GM10248 (cell line): ENCODE measurements at regions of chr18 and their contacts with region 1.

Region 1: DNA sequence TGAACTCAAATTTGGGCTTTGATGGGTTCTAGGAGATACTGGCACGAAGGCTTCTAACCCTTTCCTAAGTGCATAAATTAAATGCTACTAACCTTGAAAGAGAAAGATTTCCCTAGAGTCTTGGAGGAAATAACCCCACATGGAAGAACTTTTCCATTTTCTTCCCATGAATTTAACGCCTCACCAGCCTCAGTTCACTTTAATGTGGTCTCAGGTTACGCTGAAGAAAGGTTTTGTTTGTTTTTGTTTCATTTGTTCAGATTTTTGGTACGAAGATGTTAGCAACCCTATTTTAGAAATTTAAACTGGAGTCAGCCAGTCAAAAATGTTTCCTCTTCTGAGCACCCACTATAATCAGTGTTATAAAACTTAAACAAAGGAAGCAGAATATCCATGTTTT is 30.7 kb downstream of the METTL4 start:
- DNase-seq: no peak
- CTCF ChIP-seq: no peak

Region 2: GRCh38 chr18:2466978-2467377 is 73.6 kb before region 1 on chr18:
- CTCF ChIA-PET with region 1: no interaction called
- POLR2A ChIA-PET with region 1: no interaction called
- DNase-seq: no peak
- CTCF ChIP-seq: no peak

Region 3: DNA sequence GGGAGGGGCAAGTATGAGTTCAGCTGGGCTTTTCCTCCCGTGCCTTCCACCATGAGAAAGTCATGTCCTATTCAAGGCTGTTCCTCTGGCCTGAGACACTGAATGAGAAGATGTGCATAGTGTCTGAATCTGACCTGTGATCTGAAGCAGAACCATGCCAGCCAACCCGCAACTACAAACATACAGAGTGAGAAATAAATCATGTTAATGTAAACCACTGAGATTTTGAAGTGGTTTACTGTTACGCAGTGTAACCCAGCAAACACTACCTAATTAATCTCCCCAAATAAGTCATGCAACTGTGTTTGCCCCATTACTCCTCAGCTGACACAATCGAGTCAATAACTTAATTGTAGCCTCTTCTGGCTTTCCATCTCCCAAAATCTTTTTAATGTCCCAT is 18.5 kb before region 1 on chr18:
- CTCF ChIA-PET with region 1: interaction called, 11 read pairs
- POLR2A ChIA-PET with region 1: no interaction called
- DNase-seq: no peak
- CTCF ChIP-seq: no peak

Region 4: DNA sequence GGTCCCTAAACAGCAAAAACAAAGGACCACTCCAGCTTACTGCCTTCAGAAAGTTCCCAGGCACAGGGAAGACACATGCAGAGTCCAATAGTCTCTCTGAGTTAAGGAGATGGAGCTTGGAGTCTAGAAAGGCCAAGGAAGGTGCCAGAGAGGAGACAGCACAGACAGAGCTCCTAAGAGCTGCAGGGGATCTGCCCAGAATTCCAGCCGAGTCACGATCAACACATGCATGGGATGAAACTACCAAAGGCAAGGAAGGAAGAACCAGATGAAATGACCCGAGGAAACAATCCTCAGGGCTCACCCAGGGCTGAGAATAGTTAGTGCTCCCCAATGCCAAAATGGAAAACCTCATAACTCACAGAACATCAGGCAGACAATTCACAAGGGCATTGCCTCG is 15.3 kb after region 1 on chr18:
- CTCF ChIA-PET with region 1: interaction called, 17 read pairs
- POLR2A ChIA-PET with region 1: no interaction called
- DNase-seq: no peak
- CTCF ChIP-seq: no peak